ENCODE measurements at regions of chr12 and their contacts with region 1.

Region 1: GRCh38 chr12:8687846-8688601 is 9.8 kb upstream of the RIMKLB start:
- DNase-seq: no peak
- H3K4me3 ChIP-seq: no peak overlapping the region
- H3K27ac ChIP-seq: no peak overlapping the region
- H3K4me1 ChIP-seq: no peaks in the 10 kb centered on the region
- H3K27me3 ChIP-seq: no peaks in the 10 kb centered on the region
- CTCF ChIP-seq: no peak

Region 2: GRCh38 chr12:8823565-8824300 is 135.7 kb after region 1 on chr12:
- intact Hi-C with region 1: loop called (anchors 10 kb)
- DNase-seq: no peak
- H3K4me3 ChIP-seq: no peak overlapping the region
- H3K27ac ChIP-seq: no peak overlapping the region
- H3K4me1 ChIP-seq: no peaks in the 10 kb centered on the region
- H3K27me3 ChIP-seq: no peaks in the 10 kb centered on the region
- CTCF ChIP-seq: no peak

Region 3: DNA sequence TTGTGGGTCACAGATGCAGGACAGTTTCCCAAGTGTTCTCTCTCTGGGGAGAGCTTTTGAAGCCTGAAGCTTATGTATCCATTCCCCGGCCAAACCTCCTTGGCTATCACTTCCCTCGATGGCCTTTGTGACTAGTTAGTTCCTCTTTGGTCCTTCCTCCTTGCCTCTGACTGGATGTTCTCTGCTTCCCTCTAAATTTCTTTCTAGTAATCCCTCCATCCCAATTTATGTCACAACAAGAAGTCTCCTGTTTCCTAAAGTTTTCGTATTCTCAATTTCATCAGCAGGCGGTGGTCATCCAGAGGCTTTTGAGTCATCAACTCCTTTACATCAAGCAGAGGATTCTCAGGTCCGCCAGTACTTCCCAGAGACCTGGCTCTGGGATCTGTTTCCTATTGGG is 161.9 kb after region 1 on chr12:
- intact Hi-C with region 1: loop called (anchors 10 kb)
- DNase-seq: no peak
- H3K4me3 ChIP-seq: no peak overlapping the region
- H3K27ac ChIP-seq: no peak overlapping the region
- H3K4me1 ChIP-seq: no peaks in the 10 kb centered on the region
- H3K27me3 ChIP-seq: no peaks in the 10 kb centered on the region
- CTCF ChIP-seq: no peak